ENCODE measurements at regions of chr17 and their contacts with region 1.

Region 1: DNA sequence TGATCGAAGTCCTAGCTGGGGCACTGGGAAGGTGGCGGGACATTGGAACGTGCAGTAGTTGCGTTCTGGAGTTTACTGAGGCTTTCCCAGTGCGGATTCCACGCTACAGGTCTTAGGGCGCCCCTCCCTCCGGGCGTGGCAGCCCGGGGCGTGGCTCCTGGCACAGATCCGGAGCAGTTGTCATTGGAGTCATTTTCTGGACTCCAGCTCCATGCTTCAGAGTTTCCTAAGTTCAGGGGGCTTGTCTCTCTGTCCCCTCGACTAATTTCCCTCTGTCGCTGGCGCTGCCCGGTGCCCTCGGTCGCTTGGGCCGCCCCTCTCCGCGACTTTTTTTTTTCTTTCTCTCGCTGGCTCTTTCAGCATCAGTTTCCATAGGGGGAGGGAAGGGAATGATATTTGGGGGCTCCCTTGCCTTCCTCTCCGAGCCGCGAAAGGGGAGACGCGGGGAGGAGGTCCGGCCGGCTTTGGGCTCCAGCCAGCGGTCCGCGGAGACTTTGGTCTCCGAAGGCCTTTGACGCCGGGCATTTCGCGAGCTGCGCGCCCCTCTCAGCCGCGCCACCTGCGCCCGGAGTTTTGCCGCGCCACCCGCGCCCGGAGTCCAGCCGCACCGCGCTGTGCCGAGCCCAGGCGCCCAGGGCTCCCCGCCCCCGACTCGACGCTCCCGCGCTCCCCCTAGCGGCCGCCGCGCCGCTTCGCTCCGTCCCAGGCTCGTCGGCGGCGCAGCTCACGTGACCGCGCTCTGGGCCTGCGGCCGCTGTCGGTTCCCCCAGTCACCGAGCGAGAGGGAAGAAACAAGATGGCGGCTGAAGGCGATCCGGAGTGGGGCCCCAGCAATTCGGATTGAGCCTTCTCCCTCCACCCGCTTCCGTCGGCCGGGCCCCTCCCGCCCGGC is at the start of gene BPTF:
- DNase-seq: peak; percentile 87
- ATAC-seq: peak; percentile 94
- H3K4me3 ChIP-seq: peak within 1 kb of the TSS; percentile 97
- H3K27ac ChIP-seq: peak within 1 kb of the TSS; percentile 97
- H3K4me1 ChIP-seq: 0 out of 2 replicates have a peak, but pooled peaks cover 1% of the 10 kb centered on the region
- H3K27me3 ChIP-seq: no peaks in the 10 kb centered on the region; the same call in 1 of the 2 replicates
- CTCF ChIP-seq: peak; percentile 99
- POLR2A ChIP-seq: peak; percentile 82
- RAD21 ChIP-seq: peak; percentile 51
- total RNA-seq, gene BPTF: 32.3 and 44.4 TPM in 2 replicates

Region 2: DNA sequence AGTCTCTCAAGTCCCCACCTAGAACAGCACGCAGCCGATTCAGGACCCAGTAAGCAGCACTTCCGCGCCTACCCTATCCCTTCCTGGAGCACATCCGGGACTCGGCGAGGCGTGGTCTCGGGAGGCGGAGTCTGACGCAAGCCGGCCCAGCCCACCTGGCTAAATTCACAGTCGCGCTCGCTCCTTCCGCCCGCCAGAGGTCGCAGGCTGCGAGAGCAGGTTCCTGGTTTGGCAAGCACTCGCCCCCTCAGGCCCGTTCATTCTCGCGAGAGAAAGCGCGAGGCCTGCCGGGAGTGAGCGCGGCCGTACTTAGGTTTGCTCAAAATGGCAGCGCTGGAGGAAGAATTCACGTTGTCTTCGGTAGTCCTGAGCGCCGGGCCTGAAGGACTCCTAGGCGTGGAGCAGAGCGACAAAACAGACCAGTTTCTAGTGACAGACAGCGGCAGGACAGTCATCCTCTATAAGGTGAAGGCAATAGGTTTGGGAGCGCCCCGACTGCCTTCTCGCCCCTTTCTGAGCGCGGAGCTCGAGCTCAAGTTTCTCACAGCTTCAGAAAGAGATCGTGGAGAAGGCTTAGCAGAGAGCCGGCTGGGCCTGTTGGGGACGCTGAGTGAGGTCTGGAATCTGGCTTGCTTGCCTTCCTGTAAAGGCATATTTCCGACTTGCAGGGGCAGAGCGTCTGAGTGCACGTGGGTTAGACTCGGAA is 107.2 kb before region 1 on chr17 and contains the start of gene NOL11:
- CTCF ChIA-PET with region 1: no interaction called
- POLR2A ChIA-PET with region 1: no interaction called
- dilution Hi-C with region 1: no loop called
- in situ Hi-C with region 1: no loop called
- intact Hi-C with region 1: loop called (anchors 1 kb)
- DNase-seq: peak; percentile 98
- ATAC-seq: peak; percentile 98
- H3K4me3 ChIP-seq: peak within 1 kb of the TSS; percentile 64
- H3K27ac ChIP-seq: peak within 1 kb of the TSS; percentile 81
- H3K4me1 ChIP-seq: peaks cover 2% of the 10 kb centered on the region; the same call in 1 of the 2 replicates
- H3K27me3 ChIP-seq: no peaks in the 10 kb centered on the region
- CTCF ChIP-seq: peak; percentile 99
- POLR2A ChIP-seq: peak; percentile 91
- RAD21 ChIP-seq: peak; percentile 56
- total RNA-seq, gene NOL11: 58.3 and 78.6 TPM in 2 replicates

Region 3: DNA sequence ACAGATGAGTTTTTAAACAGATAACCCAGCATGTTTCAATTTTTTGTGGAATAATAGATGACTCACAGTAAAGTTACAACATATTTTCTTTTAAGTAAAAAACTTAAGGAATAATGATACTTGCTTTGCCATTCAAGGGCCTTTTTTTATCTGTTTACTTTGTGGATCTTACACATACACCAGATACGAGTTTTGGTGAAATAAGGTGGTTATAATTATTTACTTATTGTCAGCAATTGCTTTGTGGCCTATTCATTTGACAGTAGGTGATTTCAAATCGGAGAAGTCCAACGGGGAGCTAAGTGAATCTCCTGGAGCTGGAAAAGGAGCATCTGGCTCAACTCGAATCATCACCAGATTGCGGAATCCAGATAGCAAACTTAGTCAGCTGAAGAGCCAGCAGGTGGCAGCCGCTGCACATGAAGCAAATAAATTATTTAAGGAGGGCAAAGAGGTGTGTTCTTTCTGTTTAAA is 66.6 kb after region 1 on chr17:
- CTCF ChIA-PET with region 1: no interaction called
- POLR2A ChIA-PET with region 1: no interaction called
- dilution Hi-C with region 1: no loop called
- in situ Hi-C with region 1: no loop called
- intact Hi-C with region 1: loop called (anchors 5 kb)
- DNase-seq: peak; percentile 85
- ATAC-seq: peak; percentile 69
- H3K4me3 ChIP-seq: no peak overlapping the region
- H3K27ac ChIP-seq: no peak overlapping the region
- H3K4me1 ChIP-seq: peaks cover 5% of the 10 kb centered on the region
- H3K27me3 ChIP-seq: no peaks in the 10 kb centered on the region
- CTCF ChIP-seq: peak; percentile 44
- POLR2A ChIP-seq: no peak
- RAD21 ChIP-seq: peak; percentile 22

Region 4: DNA sequence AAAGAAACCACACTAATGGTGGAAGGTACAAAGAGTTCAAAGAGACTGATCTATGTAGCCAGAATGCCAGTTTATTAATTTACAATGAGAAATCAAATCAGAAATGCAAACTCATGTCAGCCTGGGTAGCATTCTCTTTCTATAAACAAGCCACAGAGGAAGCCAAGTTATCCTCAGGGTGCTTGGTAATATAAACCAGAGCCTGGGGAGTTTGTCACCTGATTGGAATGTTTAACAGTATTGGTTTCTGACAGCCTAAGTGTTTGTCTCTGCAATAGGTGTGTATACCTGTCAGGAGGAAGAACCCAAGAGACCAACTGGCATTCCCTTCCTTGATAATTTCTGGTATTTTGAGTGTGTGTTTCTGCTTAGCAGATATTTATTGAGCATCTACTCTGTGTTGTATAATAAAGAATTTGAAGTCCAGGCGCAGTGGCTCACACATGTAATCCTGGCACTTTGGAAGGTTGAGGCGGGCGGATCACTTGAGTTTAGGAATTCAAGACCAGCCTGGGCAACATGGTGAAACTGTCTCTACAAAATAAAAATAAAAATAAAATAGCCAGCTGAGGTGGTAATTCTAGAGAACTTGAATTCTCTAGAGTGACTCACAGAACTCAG is 174.4 kb after region 1 on chr17:
- CTCF ChIA-PET with region 1: no interaction called
- POLR2A ChIA-PET with region 1: interaction called, 10 read pairs
- dilution Hi-C with region 1: no loop called
- in situ Hi-C with region 1: no loop called
- intact Hi-C with region 1: no loop called
- DNase-seq: peak; percentile 52
- ATAC-seq: no peak
- H3K4me3 ChIP-seq: no peak overlapping the region
- H3K27ac ChIP-seq: no peak overlapping the region
- H3K4me1 ChIP-seq: peaks cover 4% of the 10 kb centered on the region; the same call in 1 of the 2 replicates
- H3K27me3 ChIP-seq: no peaks in the 10 kb centered on the region
- CTCF ChIP-seq: no peak
- POLR2A ChIP-seq: no peak
- RAD21 ChIP-seq: no peak